Adrenal gland (tissue), 19 donors: ENCODE measurements at regions of chr10 and their contacts with region 1.

Region 1: DNA sequence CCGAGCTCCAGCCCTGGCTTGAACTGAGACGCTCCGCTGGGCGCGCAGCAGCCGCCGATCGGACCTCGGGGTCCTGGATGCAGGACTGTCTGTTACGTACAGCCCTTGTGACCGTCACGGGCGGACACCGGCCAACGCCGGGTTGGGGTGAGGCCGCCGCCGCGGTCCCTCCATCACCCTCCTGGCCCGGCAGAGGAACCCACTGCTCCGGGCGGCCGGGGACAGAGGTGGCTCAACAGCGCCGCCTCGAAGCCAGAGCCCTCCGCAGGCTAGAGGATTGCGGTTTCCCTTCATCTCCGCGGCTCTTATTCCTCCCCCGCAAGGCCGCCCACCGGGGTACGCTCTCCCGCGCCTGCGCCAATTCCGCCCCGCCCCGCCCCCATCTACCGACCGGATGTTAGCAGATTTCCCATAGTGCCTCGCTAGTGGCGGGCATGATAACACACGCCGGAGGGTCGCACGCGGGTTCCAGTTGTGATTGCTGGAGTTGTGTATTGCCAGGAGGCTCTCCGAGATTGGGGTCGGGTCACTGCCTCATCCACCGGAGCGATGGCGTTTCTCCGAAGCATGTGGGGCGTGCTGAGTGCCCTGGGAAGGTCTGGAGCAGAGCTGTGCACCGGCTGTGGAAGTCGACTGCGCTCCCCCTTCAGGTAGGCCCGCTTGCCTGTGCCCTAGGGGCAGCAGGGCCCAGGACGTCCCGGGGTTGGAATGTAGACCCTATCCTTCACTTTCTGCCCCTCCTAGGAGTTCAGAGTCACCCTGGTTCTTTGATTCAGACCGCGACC is at the start of gene TFAM:
- DNase-seq: peak; percentile 93 to 98 (median 97)
- H3K4me3 ChIP-seq: peak within 1 kb of the TSS; percentile 24 to 97 (median 76)
- H3K27ac ChIP-seq: peak within 1 kb of the TSS; percentile 60 to 93 (median 89)
- H3K4me1 ChIP-seq: peaks cover 0 to 26% of the 10 kb centered on the region in 2 donors
- H3K27me3 ChIP-seq: no peaks in the 10 kb centered on the region
- CTCF ChIP-seq: peak; percentile 22 to 67 (median 53)
- POLR2A ChIP-seq: peak; percentile 51 to 86
- total RNA-seq, gene TFAM: 16.2 to 55.7 (median 34.3) TPM

Region 2: DNA sequence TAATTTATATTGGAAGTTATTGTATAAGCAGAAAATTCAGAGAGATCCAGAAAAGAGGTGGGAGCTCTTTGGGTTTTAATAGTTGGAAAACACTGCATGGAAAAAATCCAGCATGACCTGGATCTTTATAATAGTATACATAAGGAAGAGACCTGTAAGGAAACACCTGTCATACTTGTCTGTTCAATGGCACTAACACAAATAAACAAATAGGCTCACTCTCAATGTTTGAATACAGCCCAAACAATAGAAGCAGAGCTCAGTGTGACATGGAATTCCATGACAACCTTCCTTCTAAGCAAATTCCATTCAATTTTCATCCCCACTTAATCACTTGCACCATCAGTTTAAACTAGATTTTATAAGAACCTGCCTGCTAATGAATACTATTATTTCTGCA is 84.5 kb before region 1 on chr10:
- intact Hi-C with region 1: loop called in 1 of 2 experiments (anchors 10 kb)
- DNase-seq: no peak
- H3K4me3 ChIP-seq: no peak overlapping the region
- H3K27ac ChIP-seq: no peak overlapping the region
- H3K4me1 ChIP-seq: no peaks in the 10 kb centered on the region
- H3K27me3 ChIP-seq: no peaks in the 10 kb centered on the region
- CTCF ChIP-seq: no peak
- POLR2A ChIP-seq: no peak

Region 3: GRCh38 chr10:58334817-58335305 is 50.3 kb before region 1 on chr10 and contains the start of gene UBE2D1:
- intact Hi-C with region 1: loop called (anchors 5 to 10 kb)
- DNase-seq: peak; percentile 88 to 94 (median 90)
- H3K4me3 ChIP-seq: peak within 1 kb of the TSS; percentile 72 to 99 (median 93)
- H3K27ac ChIP-seq: peak within 1 kb of the TSS; percentile 40 to 94 (median 89)
- H3K4me1 ChIP-seq: peaks cover 6 to 19% of the 10 kb centered on the region in 2 donors
- H3K27me3 ChIP-seq: no peaks in the 10 kb centered on the region
- CTCF ChIP-seq: peak in 4 of 6 experiments; percentile 7 to 37 (median 26)
- POLR2A ChIP-seq: peak; percentile 93 to 96
- total RNA-seq, gene UBE2D1: 9.6 to 33.8 (median 20.4) TPM

Region 4: DNA sequence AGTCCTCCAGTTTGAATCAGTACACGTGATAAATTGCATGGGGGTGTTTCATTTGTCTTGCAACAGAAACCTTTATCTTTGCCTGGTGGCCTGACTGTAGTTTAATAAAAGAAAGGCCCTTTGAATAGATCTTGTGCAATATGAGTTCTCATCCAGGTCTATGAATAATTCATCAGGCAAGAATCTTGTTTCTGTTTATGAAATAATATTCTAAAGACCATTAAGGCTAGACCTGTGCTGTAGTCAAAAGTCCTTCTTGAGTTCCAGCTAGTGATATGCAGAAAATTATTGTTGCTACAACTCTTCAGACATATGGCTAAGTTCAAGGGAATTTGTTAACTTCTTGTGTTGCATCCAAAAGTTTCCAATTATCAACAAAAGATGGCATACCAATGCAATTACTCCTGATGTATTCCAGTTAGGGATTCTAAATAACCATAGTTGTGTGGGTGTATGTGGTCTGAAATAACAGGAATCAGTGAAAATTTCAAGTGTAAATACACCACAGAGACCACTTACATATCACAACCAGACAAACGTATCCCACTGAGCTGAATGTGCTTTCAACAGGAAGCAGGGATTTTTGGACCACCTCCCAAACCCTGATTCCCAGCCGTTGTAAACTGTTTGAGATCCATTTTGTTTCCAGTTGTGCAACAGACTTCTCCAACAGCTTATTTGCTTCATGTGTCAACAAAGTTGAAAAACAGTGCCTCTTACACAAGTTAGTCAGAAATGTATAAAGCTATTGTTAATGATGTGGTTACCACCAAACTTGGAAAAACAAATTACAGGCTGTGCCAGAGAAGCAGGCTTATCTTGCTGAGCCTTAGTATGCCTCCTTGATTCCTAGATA is 72.8 kb after region 1 on chr10:
- intact Hi-C with region 1: no loop called
- DNase-seq: peak in 4 of 7 donors; percentile 13 to 54 (median 16)
- H3K4me3 ChIP-seq: no peak overlapping the region
- H3K27ac ChIP-seq: peak overlapping the region in 1 of 5 donors; percentile 25
- H3K4me1 ChIP-seq: no peaks in the 10 kb centered on the region
- H3K27me3 ChIP-seq: no peaks in the 10 kb centered on the region
- CTCF ChIP-seq: no peak
- POLR2A ChIP-seq: no peak